ENCODE measurements at regions of chr5 and their contacts with region 1.

Region 1: DNA sequence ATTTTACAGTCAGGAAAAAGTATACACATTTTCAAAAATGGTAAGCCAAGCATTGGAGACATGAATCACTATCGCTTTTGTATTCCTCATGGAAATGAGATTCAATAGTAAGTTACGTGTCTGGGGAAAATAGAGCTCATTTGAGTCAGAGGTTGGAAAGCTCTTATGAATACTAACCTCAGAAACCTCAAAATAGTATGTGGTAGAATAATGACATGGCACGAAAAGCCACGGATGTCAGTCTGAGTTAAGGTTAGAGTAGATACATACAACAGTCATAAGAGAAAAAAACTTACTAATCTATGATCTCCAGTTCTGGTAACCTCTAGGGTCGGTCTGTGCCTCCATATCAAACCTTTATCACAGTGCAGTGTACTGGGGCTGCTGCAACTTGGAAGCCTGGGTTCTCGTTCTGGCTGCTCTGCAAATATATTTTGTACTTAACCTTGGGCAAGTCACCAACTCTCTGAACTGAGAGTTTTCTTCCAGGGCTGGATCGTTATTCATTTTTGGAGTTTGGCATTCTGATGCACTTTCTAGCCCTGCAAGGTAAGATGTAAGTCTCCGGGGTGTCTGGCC is 31.8 kb downstream of the MAP1B start:
- DNase-seq: peak in 4 of 5 donors; percentile 32 to 53 (median 40)
- H3K4me3 ChIP-seq: no peak overlapping the region
- H3K27ac ChIP-seq: peak overlapping the region in 1 of 2 donors; percentile 6
- H3K4me1 ChIP-seq: peaks cover 19% of the 10 kb centered on the region
- H3K27me3 ChIP-seq: no peaks in the 10 kb centered on the region
- CTCF ChIP-seq: no peak
- EP300 ChIP-seq: no peak
- POLR2A ChIP-seq: no peak

Region 2: GRCh38 chr5:72210888-72211678 is 72.1 kb after region 1 on chr5:
- intact Hi-C with region 1: loop called in 1 of 4 experiments (anchors 10 kb)
- DNase-seq: peak; percentile 40 to 69 (median 55)
- H3K4me3 ChIP-seq: no peak overlapping the region
- H3K27ac ChIP-seq: no peak overlapping the region
- H3K4me1 ChIP-seq: peaks cover 6% of the 10 kb centered on the region
- H3K27me3 ChIP-seq: no peaks in the 10 kb centered on the region
- CTCF ChIP-seq: no peak
- EP300 ChIP-seq: no peak
- POLR2A ChIP-seq: no peak

Region 3: DNA sequence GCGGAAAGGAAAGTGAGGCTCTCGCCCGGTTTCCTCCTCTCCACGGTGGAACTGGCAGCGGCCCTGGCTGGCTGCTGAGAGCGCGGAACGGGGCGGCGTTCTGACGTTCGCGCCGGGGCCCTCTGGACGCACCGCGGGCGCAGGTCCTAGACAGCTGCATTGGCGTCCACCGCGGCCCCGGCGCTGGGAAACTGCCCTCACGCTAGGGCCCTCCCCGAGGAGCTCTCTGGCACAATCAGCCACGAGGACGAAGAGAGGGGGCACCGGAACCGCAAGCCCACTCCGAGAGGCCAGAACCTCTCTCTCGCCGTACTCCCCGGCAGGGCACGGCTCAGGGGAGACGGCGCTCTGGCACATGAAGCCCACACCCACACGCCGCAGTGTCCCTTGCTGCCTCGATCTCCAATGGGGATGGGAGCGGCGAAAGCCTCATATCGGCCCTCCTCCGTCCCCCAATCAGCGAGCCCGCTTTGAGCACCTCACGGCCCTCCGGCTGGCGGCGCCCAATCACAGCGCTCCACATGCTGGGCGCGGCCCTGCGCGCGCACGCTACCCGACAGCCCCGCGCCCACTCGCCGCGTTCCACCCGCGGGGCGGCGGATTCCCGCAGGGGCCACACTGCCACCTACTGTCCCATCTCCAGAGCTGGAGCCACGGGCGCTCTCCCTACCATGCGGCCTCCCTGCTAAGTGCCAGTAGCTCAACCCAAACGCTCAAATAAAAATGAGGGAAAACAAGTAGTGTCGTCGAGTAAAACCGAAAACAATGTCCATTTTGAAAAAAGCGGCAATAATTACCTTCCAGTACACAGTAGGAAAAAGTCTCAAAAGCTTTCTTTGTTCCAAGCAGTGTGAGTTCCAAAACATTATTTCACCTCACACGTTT is 169.2 kb after region 1 on chr5:
- intact Hi-C with region 1: loop called in 2 of 4 experiments (anchors 10 kb)
- DNase-seq: peak; percentile 96 to 98 (median 97)
- H3K4me3 ChIP-seq: peak overlapping the region; percentile 80
- H3K27ac ChIP-seq: peak overlapping the region; percentile 85 to 96
- H3K4me1 ChIP-seq: no peaks in the 10 kb centered on the region
- H3K27me3 ChIP-seq: no peaks in the 10 kb centered on the region
- CTCF ChIP-seq: peak; percentile 88 to 98 (median 95)
- EP300 ChIP-seq: peak; percentile 23
- POLR2A ChIP-seq: peak; percentile 90

Region 4: GRCh38 chr5:73498057-73499008 is 1359.3 kb after region 1 on chr5 and contains the start of gene BTF3:
- intact Hi-C with region 1: loop called in 1 of 4 experiments (anchors 10 kb)
- DNase-seq: peak; percentile 93 to 96 (median 94)
- H3K4me3 ChIP-seq: peak within 1 kb of the TSS; percentile 60
- H3K27ac ChIP-seq: peak within 1 kb of the TSS; percentile 85 to 86
- H3K4me1 ChIP-seq: peaks cover 4% of the 10 kb centered on the region
- H3K27me3 ChIP-seq: no peaks in the 10 kb centered on the region
- CTCF ChIP-seq: no peak
- EP300 ChIP-seq: no peak
- POLR2A ChIP-seq: peak; percentile 83
- total RNA-seq, gene BTF3: 648 to 1,276 (median 885) TPM

Measured in ovary (tissue), 10 donors.